Activated B cell treated with CpG ODN at 0.5 μM for 24 hours (primary cell): ENCODE measurements at regions of chr5 and their contacts with region 1.

Region 1: DNA sequence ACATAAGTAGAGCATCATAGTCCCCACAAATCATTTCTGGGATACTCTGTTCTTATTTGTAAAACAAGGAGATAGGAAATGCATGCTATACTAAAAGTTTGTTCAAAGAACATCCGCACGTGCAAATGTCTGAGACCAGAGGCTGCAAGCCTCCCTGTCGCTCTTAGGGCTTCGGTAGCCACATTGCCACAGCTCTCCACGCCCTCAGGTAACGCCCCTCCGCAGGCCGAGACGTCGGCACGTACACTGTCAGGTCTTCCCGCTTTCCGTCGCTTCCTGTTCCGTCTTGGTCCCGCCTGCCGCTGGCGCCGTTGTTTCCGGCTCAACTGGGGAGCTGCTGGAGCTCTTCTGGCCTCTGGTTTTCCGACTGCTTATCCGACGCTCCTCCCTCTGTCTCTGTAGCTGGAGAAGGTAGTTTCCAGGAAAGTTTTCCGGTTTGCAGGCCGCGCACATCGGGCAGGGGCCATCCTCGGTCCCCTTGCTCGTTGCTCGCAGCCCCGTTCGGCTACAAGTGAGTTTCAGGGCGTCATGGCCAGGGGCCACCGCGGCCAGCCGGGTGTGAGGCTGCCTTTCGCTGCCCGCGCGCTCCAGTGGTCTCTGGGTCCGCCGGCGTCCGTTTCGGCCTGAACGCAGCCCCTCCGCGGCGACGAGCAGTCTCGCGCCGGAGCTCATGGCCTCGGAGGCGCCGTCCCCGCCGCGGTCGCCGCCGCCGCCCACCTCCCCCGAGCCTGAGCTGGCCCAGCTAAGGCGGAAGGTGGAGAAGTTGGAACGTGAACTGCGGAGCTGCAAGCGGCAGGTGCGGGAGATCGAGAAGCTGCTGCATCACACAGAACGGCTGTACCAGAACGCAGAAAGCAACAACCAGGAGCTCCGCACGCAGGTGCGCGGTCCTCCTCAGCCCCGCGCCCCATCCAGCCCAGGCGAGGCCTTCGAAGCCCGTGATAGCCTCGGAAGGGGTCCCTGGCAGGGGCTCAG is at the start of gene AGGF1:
- DNase-seq: peak; percentile 79
- ATAC-seq: peak; percentile 99
- H3K4me3 Mint-ChIP-seq: peak within 1 kb of the TSS; percentile 99
- H3K27ac Mint-ChIP-seq: peak within 1 kb of the TSS; percentile 89
- H3K4me1 Mint-ChIP-seq: peaks cover 28% of the 10 kb centered on the region
- H3K27me3 Mint-ChIP-seq: peaks cover 8% of the 10 kb centered on the region
- CTCF ChIP-seq: no peak
- total RNA-seq, gene AGGF1: 22.2 and 26.5 TPM in 2 replicates

Region 2: GRCh38 chr5:76874088-76874581 is 156.2 kb before region 1 on chr5:
- CTCF ChIA-PET with region 1: no interaction called
- POLR2A ChIA-PET with region 1: no interaction called
- intact Hi-C with region 1: loop called (anchors 2 kb)
- DNase-seq: no peak
- ATAC-seq: peak; percentile 61
- H3K4me3 Mint-ChIP-seq: peak overlapping the region; percentile 60
- H3K27ac Mint-ChIP-seq: peak overlapping the region; percentile 54
- H3K4me1 Mint-ChIP-seq: peaks cover 16% of the 10 kb centered on the region
- H3K27me3 Mint-ChIP-seq: no peaks in the 10 kb centered on the region
- CTCF ChIP-seq: no peak

Region 3: GRCh38 chr5:77086689-77087483 is 56.5 kb after region 1 on chr5 and contains the start of gene ZBED3:
- CTCF ChIA-PET with region 1: no interaction called
- POLR2A ChIA-PET with region 1: no interaction called
- intact Hi-C with region 1: loop called (anchors 1 kb)
- DNase-seq: peak; percentile 49
- ATAC-seq: peak; percentile 83
- H3K4me3 Mint-ChIP-seq: peak within 1 kb of the TSS; percentile 93
- H3K27ac Mint-ChIP-seq: peak within 1 kb of the TSS; percentile 51
- H3K4me1 Mint-ChIP-seq: peaks cover 14% of the 10 kb centered on the region
- H3K27me3 Mint-ChIP-seq: peaks cover 7% of the 10 kb centered on the region
- CTCF ChIP-seq: no peak
- total RNA-seq, gene ZBED3: 3.2 and 3.5 TPM in 2 replicates

Region 4: DNA sequence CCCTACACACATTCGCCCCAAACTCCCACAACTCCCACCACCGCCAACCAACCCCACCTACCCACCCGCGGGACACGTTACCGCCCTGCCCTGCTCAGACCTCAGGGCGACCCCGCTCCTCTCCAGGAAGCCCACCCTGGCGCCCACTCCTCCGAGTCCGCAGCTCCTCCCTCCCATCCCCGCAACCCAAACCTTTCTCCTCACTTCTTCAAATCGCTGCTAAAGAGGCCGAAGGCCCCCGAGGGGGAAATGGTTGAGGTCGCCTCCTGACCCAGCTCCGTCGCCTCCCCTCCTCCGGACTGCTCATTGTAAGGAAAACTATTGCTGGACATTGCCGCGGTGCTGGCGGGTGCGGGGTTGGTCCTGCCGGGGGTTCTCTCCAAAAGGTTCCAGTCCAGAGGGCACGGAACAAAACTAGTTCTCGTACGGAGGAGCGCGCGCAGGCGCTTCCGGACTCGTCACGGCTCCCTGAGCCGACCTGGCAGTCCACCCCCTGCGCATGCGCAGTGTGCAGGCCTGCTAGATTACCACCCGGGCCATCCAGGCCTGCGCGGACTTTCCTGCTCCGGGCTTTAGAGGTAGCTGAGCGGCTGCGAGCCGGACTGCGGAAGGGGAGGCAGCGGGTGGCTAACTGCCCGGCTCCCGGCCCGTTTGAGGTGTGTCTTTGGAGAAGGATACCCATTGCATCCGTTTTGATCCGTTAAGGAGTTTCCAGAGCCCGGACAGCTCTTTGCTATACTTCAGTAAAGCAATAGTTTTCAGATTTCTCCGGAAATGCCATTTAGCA is 1264.1 kb after region 1 on chr5 and contains the start of gene AP3B1:
- CTCF ChIA-PET with region 1: no interaction called
- POLR2A ChIA-PET with region 1: no interaction called
- intact Hi-C with region 1: loop called (anchors 1 kb)
- DNase-seq: peak; percentile 96
- ATAC-seq: peak; percentile 94
- H3K4me3 Mint-ChIP-seq: peak within 1 kb of the TSS; percentile 98
- H3K27ac Mint-ChIP-seq: peak within 1 kb of the TSS; percentile 98
- H3K4me1 Mint-ChIP-seq: peaks cover 44% of the 10 kb centered on the region
- H3K27me3 Mint-ChIP-seq: no peaks in the 10 kb centered on the region
- CTCF ChIP-seq: no peak
- total RNA-seq, gene AP3B1: 46.8 and 52.9 TPM in 2 replicates